H1 (cell line): ENCODE measurements at regions of chrX and their contacts with region 1.

Region 1: DNA sequence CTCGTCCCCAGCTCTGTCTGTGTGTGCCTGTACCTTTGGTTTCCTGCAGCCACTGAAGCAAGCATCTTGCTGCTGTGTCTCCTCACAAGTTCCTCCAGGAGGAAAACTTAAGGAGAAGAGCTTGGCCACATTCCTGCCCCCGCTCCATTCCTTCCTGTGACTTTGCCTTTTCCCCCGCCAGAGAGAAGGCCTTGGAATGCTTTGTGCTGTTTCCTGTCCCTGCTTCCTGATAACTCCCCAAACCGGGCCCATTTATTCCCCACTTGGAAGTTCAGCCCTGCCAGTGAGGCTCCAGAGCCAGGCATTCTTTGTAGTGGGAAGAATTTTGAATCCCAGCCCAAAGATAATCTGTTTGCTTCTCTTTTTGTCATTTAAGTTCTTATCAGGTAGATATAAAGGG is 33.1 kb downstream of the SMIM10L2A start:
- DNase-seq: no peak
- H3K4me3 ChIP-seq: no peak overlapping the region
- H3K27ac ChIP-seq: no peak overlapping the region
- H3K4me1 ChIP-seq: peaks cover 0 to 8% (median 0%) of the 10 kb centered on the region in 4 experiments; a peak in 1 of 7 replicates
- H3K27me3 ChIP-seq: no peaks in the 10 kb centered on the region
- CTCF ChIP-seq: no peak
- EP300 ChIP-seq: no peak
- POLR2A ChIP-seq: no peak
- RAD21 ChIP-seq: no peak

Region 2: DNA sequence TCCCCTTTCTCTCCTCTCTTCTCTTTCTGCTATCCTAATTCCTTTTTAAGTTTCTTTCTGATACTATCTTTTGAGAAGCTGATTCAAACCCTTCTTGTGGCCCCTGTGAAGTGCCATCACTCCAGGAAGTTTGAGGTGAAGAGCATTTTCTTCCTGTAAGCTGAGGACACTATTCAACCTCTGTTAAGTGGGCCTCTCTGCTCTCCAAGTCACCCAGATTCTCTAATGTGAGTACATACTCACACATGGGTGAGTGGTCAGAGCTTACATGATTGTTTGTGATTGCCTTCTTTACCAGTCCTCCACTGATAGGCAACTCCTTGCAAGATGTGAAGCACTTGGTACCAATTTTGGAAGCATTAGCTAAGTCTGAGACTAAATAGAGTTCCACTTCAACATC is 51.4 kb before region 1 on chrX:
- CTCF ChIA-PET with region 1: no interaction called
- POLR2A ChIA-PET with region 1: no interaction called
- DNase-seq: no peak
- H3K4me3 ChIP-seq: no peak overlapping the region
- H3K27ac ChIP-seq: no peak overlapping the region
- H3K4me1 ChIP-seq: peaks cover 0 to 2% (median 0%) of the 10 kb centered on the region in 4 experiments; a peak in 3 of 7 replicates
- H3K27me3 ChIP-seq: no peaks in the 10 kb centered on the region
- CTCF ChIP-seq: no peak
- EP300 ChIP-seq: no peak
- POLR2A ChIP-seq: no peak
- RAD21 ChIP-seq: no peak

Region 3: DNA sequence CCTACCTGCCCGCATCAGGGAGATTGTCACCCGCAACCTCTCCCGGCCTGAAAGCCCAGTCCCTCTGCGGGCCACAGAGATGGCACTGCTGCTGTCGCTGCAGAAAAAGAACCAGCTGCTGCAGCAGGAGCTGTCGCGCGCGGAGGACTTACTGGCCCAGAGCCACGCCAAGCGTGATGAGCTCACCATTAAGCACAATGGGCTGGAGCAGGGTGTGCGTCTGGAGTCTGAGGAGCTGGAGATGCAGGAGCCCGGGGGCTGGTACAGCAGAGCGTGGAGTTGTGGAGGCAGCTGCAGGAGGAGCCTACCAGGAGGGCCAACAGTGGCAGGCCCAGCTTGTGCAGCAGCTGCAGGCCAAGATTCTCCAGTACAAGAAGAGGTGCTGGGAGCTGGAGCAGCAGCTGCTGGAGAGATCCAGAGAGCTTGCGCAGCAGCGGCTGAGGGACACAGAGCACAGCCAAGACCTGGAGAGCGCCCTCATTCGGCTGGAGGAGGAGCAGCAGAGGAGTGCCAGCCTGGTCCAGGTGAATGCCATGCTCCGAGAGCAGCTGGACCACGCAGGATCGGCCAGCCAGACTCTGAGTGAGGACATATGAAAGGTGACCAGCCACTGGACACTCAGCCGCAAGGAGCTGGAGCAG is 21.8 kb before region 1 on chrX:
- CTCF ChIA-PET with region 1: interaction called, 13 read pairs
- POLR2A ChIA-PET with region 1: no interaction called
- DNase-seq: no peak
- H3K4me3 ChIP-seq: no peak overlapping the region
- H3K27ac ChIP-seq: no peak overlapping the region
- H3K4me1 ChIP-seq: no peaks in the 10 kb centered on the region; a peak in 2 of 7 replicates
- H3K27me3 ChIP-seq: no peaks in the 10 kb centered on the region
- CTCF ChIP-seq: peak in 1 of 3 experiments; percentile 33; a peak in 1 of 4 replicates
- EP300 ChIP-seq: no peak
- POLR2A ChIP-seq: no peak
- RAD21 ChIP-seq: peak in 1 of 2 experiments; percentile 23; a peak in 1 of 4 replicates

Region 4: DNA sequence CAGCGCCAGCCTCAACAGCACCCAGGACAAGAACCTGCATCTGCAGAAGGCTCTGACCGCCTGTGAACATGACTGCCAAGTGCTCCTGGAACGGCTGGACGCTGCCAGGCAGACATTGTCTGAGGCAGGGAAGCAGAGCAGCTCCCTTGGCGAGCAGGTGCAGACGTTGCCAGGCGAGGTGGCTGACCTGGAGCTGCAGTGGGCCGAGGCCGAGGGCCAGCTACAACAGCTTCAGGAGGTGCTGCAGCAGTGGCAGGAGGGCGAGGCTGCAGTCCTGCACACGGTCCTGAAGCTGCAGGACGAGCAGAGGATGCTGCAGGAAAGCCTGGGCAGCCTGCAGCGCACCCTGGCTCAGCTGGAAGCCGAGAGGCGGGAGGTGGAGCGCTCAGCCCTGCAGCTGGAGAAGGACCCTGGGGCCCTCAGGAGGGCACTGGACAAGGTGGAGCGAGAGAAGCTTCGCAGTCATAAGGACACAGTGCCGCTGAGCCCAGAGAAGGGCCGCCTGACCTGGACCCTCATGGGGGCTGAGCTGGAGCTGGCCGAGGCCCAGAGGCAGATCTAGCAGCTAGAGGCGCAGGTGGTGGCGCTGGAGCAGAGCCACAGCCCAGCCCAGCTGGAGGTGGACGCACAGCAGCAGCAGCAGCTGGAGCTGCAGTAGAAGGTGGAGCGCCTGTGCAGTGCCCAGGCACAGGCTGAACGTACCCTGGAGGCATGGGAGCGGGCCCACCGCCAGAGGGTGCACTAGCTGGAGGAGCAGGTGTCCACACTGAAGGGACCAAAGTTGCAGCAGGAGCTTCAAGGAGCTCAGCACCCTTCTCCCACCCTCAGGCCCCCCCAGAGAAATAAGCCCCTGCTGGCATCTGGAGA is 16.7 kb before region 1 on chrX:
- CTCF ChIA-PET with region 1: interaction called, 13 read pairs
- POLR2A ChIA-PET with region 1: no interaction called
- DNase-seq: no peak
- H3K4me3 ChIP-seq: no peak overlapping the region
- H3K27ac ChIP-seq: no peak overlapping the region
- H3K4me1 ChIP-seq: no peaks in the 10 kb centered on the region
- H3K27me3 ChIP-seq: no peaks in the 10 kb centered on the region
- CTCF ChIP-seq: peak in 2 of 3 experiments; percentile 29 to 32; a peak in 3 of 4 replicates
- EP300 ChIP-seq: no peak
- POLR2A ChIP-seq: no peak
- RAD21 ChIP-seq: peak; percentile 26 to 38; a peak in 3 of 4 replicates

Region 5: DNA sequence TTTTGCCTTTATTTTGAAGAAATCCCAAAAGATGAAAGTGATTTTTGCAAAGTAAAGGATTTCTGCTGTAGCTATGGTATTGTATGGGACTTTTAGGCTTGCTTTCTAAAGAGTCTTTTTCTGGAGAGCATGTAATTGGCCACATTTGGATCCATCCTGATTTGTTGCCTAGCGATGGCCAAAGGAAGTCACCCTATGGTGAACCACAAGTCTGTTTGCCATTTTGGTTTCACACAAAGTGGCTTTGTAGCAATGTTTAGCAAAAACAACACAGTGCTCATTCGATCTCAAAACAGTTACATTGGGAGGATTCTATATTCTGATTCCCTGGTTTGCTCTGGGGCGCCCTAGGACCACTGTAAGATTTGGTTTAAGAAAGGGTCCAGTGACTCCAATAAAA is 21.6 kb after region 1 on chrX:
- CTCF ChIA-PET with region 1: interaction called, 11 read pairs
- POLR2A ChIA-PET with region 1: no interaction called
- DNase-seq: no peak
- H3K4me3 ChIP-seq: no peak overlapping the region
- H3K27ac ChIP-seq: no peak overlapping the region
- H3K4me1 ChIP-seq: no peaks in the 10 kb centered on the region
- H3K27me3 ChIP-seq: no peaks in the 10 kb centered on the region
- CTCF ChIP-seq: no peak
- EP300 ChIP-seq: no peak
- POLR2A ChIP-seq: no peak
- RAD21 ChIP-seq: no peak

Region 6: GRCh38 chrX:135489542-135489941 is 34.7 kb after region 1 on chrX:
- CTCF ChIA-PET with region 1: no interaction called
- POLR2A ChIA-PET with region 1: no interaction called
- DNase-seq: no peak
- H3K4me3 ChIP-seq: no peak overlapping the region
- H3K27ac ChIP-seq: no peak overlapping the region
- H3K4me1 ChIP-seq: no peaks in the 10 kb centered on the region
- H3K27me3 ChIP-seq: no peaks in the 10 kb centered on the region
- CTCF ChIP-seq: no peak
- EP300 ChIP-seq: no peak
- POLR2A ChIP-seq: no peak
- RAD21 ChIP-seq: no peak

Region 7: GRCh38 chrX:135536877-135537276 is 82.1 kb after region 1 on chrX:
- CTCF ChIA-PET with region 1: no interaction called
- POLR2A ChIA-PET with region 1: no interaction called
- DNase-seq: no peak
- H3K4me3 ChIP-seq: no peak overlapping the region
- H3K27ac ChIP-seq: no peak overlapping the region
- H3K4me1 ChIP-seq: no peaks in the 10 kb centered on the region
- H3K27me3 ChIP-seq: no peaks in the 10 kb centered on the region
- CTCF ChIP-seq: no peak
- EP300 ChIP-seq: no peak
- POLR2A ChIP-seq: no peak
- RAD21 ChIP-seq: no peak